Activated naive CD4-positive, alpha-beta T cell treated with anti-CD3 and anti-CD28 coated beads for 36 hours (primary cell): ENCODE measurements at regions of chr5 and their contacts with region 1.

Region 1: GRCh38 chr5:79235634-79236363 is at the start of gene JMY:
- DNase-seq: peak; percentile 90
- H3K4me3 Mint-ChIP-seq: peak within 1 kb of the TSS; percentile 91
- H3K27ac Mint-ChIP-seq: peak within 1 kb of the TSS; percentile 99
- H3K4me1 Mint-ChIP-seq: peaks cover 17% of the 10 kb centered on the region
- H3K27me3 Mint-ChIP-seq: no peaks in the 10 kb centered on the region
- total RNA-seq, gene JMY: 11.8 to 12.1 TPM

Region 2: GRCh38 chr5:78984439-78985115 is 251.2 kb before region 1 on chr5:
- CTCF ChIA-PET with region 1: no interaction called
- intact Hi-C with region 1: loop called (anchors 1 kb)
- DNase-seq: peak; percentile 81
- H3K4me3 Mint-ChIP-seq: peak overlapping the region; percentile 84
- H3K27ac Mint-ChIP-seq: peak overlapping the region; percentile 87
- H3K4me1 Mint-ChIP-seq: peaks cover 35% of the 10 kb centered on the region
- H3K27me3 Mint-ChIP-seq: no peaks in the 10 kb centered on the region

Region 3: DNA sequence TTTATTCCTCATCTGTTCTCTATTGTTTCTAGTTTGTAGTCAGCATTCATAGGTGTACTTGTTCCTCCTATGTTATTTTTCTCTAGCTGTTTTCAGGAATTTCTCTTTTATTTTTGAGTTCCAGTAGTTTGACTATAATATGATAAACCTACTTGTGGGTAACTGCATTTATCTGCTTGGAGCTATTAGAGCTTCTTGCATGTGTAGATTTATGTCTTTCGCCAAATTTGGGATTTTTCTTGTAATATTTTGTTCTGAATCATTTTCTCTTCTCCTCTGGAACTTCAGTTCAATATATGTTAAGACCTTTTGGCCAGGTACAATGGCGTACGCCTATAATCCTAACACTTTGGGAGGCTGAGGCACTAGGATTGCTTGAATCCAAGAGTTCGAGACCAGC is 37.5 kb after region 1 on chr5:
- CTCF ChIA-PET with region 1: no interaction called
- intact Hi-C with region 1: loop called (anchors 1 kb)
- DNase-seq: no peak
- H3K4me3 Mint-ChIP-seq: no peak overlapping the region
- H3K27ac Mint-ChIP-seq: peak overlapping the region; percentile 36
- H3K4me1 Mint-ChIP-seq: peaks cover 34% of the 10 kb centered on the region
- H3K27me3 Mint-ChIP-seq: no peaks in the 10 kb centered on the region

Region 4: DNA sequence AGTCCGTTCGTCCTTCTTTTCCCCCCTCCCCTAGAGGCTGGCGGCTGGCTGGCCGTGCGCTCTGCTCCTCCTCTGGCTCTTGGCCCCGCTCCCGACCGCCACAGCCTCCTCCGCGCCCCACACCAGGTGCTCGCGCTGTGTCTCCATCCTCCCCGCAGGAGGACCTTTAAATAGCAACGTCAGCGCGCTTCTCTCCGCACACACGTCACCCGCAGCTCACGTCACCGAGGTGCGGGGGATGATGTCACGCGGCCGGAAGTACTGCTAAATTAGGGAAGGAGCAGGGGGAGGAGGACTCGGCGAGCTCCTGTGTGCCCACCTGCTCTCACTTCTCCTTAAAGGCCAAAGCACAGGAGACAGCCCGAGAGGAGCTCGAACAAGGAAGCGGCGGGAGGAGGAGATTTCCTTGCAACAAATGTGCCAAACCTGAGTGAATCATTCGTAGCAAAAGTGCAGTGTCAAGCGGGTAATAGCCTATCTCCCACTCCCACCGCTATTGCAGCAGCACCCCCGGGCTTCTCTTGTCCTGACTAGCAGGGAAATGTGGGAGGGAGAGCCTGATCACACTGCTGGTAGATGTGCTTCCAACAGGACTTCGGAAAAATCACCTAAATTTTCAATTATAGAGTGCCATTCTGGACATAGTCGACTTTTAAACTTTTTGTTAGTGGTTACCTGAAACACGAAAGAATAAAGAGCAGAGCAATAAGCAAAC is 278.7 kb after region 1 on chr5:
- CTCF ChIA-PET with region 1: no interaction called
- intact Hi-C with region 1: loop called (anchors 1 kb)
- DNase-seq: peak; percentile 91
- H3K4me3 Mint-ChIP-seq: peak overlapping the region; percentile 96
- H3K27ac Mint-ChIP-seq: peak overlapping the region; percentile 93
- H3K4me1 Mint-ChIP-seq: peaks cover 33% of the 10 kb centered on the region
- H3K27me3 Mint-ChIP-seq: peaks cover 19% of the 10 kb centered on the region

Region 5: DNA sequence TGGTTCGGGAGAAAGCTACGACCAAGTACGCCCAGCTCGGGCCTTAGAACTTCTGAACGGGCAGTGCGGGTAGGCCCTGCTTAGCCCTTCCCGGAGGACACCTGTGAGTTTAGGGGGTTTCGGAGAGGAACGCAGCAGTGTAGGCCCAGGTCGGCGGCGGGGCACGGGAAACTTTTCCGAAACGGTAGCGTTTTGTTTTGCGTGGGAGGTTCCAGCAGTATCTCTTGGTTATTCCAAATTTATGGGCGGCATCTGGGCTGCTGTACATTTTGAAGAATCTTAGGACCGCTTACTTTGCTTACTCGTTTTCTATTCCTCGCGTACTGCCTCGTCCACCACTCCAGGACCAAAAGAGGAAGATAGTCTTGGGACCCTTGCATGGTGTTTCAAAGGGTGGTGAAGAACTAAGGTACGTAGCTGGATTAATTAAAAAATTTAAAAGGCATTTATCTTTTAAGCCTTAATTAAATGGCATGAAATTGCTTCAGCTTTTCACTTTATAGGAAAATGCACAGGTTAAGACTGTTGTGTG is 376.9 kb after region 1 on chr5:
- CTCF ChIA-PET with region 1: no interaction called
- intact Hi-C with region 1: loop called (anchors 2 kb)
- DNase-seq: peak; percentile 51
- H3K4me3 Mint-ChIP-seq: peak overlapping the region; percentile 97
- H3K27ac Mint-ChIP-seq: peak overlapping the region; percentile 98
- H3K4me1 Mint-ChIP-seq: peaks cover 37% of the 10 kb centered on the region
- H3K27me3 Mint-ChIP-seq: no peaks in the 10 kb centered on the region

Region 6: GRCh38 chr5:80181618-80182211 is 945.9 kb after region 1 on chr5:
- CTCF ChIA-PET with region 1: no interaction called
- intact Hi-C with region 1: loop called (anchors 10 kb)
- DNase-seq: peak; percentile 69
- H3K4me3 Mint-ChIP-seq: peak overlapping the region; percentile 54
- H3K27ac Mint-ChIP-seq: peak overlapping the region; percentile 83
- H3K4me1 Mint-ChIP-seq: peaks cover 87% of the 10 kb centered on the region
- H3K27me3 Mint-ChIP-seq: no peaks in the 10 kb centered on the region